WTC11 (cell line): ENCODE measurements at regions of chr1 and their contacts with region 1.

Region 1: DNA sequence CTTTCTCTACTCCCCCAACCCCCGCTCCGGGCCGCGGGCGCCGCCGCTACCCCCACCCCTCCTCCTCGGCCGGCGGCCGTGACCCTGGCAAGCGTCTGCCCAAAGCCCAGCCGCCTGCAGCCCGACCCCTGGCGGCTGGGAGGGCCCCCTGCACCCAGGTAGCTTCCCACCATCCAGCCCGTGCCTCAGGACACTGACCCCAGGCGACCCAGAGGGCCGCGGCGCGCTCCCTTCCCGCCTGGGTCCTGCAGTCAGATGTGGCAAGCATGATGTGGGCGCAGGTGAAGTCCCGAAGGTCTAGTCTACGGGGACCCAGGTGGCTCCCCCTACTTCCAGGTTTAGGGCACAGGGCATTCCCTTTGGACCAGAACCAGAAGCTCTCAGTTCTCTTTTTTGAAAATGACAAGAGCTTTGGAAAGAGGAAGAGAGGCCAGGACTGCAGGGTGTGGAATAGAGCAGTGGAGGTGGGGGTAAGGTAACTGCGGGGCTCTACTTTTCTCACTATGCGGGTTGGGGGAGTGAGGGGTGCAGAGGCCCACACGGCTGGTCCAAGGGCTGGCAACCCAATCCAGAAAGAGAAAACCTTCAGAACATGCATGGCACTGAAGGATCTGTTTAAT is at the start of gene DENND4B:
- DNase-seq: peak; percentile 91
- ATAC-seq: peak; percentile 93
- H3K4me3 Mint-ChIP-seq: peak within 1 kb of the TSS; percentile 81
- H3K27ac Mint-ChIP-seq: peak within 1 kb of the TSS; percentile 8
- H3K4me1 Mint-ChIP-seq: peaks cover 13% of the 10 kb centered on the region
- H3K27me3 Mint-ChIP-seq: no peaks in the 10 kb centered on the region
- CTCF ChIP-seq: peak; percentile 85
- total RNA-seq, gene DENND4B: 88.9 to 93.9 TPM (median 93.1 TPM) in 3 replicates

Region 2: DNA sequence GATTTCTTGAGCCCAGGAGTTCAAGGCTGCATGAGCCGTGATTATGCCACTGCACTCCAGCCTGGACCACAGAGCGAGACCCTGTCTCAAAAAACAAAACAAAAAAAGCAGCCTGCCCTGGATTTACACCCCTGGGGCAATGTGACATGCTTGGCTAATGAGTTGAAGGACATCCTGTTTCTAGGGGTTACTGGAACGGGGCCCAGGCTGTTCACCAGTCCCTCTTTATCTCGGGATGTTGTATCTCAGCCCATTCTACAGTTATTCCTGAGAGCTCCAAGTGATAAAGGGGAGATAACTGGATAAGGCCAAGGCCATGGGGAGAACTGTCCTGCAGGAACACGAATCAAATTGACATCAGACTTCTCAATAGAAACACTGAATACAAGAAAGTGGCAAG is 359.4 kb before region 1 on chr1:
- CTCF ChIA-PET with region 1: no interaction called
- POLR2A ChIA-PET with region 1: no interaction called
- DNase-seq: no peak
- ATAC-seq: no peak
- H3K4me3 Mint-ChIP-seq: no peak overlapping the region
- H3K27ac Mint-ChIP-seq: no peak overlapping the region
- H3K4me1 Mint-ChIP-seq: peaks cover 4% of the 10 kb centered on the region
- H3K27me3 Mint-ChIP-seq: no peaks in the 10 kb centered on the region
- CTCF ChIP-seq: no peak

Region 3: GRCh38 chr1:153677718-153678505 is 268.8 kb before region 1 on chr1:
- CTCF ChIA-PET with region 1: interaction called, 10 read pairs
- POLR2A ChIA-PET with region 1: no interaction called
- DNase-seq: peak; percentile 78
- ATAC-seq: peak; percentile 63
- H3K4me3 Mint-ChIP-seq: peak overlapping the region; percentile 87
- H3K27ac Mint-ChIP-seq: no peak overlapping the region
- H3K4me1 Mint-ChIP-seq: peaks cover 18% of the 10 kb centered on the region
- H3K27me3 Mint-ChIP-seq: peaks cover 24% of the 10 kb centered on the region
- CTCF ChIP-seq: peak; percentile 82

Region 4: DNA sequence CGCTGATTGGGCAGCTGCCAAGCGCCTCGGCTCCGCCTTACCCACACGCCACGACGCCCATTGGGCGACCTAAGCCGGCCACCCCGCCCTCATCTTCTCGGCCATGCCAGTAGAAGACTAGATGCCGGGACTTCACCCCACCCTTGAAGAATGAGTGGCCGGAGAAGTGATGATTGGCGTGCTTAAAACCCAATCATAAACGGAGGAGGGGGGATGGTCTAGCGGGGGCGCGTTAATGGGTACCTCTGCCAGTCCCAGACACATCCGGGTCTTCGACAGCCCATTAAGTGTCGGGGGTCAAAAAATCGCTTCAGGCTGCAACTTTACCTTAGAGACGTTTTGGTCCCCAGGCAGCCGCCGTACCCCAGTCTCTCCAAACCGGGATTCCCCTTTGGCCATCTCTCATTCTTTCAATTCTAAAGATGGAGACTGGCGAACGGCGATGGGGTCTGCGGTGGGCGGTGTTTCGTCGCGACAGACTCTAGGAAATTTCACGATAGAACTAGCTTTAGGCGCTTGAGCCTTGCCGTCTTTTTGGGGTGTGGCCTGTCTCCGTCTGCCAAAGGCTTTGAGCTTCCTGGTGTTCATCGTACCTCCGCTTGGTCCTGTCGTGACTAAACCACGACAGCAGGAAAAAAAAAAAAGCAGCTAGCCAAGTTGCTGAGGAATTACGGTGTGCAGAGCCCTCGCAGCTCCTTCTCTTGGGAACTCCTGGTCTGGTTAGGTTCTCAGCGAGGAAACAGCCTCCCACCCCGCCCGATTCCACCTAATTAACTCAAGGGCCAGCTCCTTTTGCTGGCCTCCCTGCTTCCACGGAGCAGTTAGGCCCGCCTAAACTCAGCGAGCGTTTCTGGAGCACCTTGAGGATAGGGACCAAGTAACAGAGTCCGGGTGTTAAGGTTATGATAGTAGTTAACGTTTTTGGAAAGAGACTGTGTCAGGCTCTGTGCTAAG is 23.5 kb before region 1 on chr1 and contains the start of gene GATAD2B:
- CTCF ChIA-PET with region 1: interaction called, 24 read pairs
- POLR2A ChIA-PET with region 1: interaction called, 6 read pairs
- DNase-seq: peak; percentile 99
- ATAC-seq: peak; percentile 97
- H3K4me3 Mint-ChIP-seq: peak within 1 kb of the TSS; percentile 96
- H3K27ac Mint-ChIP-seq: peak within 1 kb of the TSS; percentile 96
- H3K4me1 Mint-ChIP-seq: peaks cover 26% of the 10 kb centered on the region
- H3K27me3 Mint-ChIP-seq: no peaks in the 10 kb centered on the region
- CTCF ChIP-seq: no peak
- total RNA-seq, gene GATAD2B: 42.1 to 46.9 TPM (median 44.5 TPM) in 3 replicates

Region 5: GRCh38 chr1:153958111-153958960 is 11.6 kb after region 1 on chr1 and contains the start of gene CRTC2:
- CTCF ChIA-PET with region 1: interaction called, 27 read pairs
- POLR2A ChIA-PET with region 1: interaction called, 8 read pairs
- DNase-seq: peak; percentile 99
- ATAC-seq: peak; percentile 88
- H3K4me3 Mint-ChIP-seq: peak within 1 kb of the TSS; percentile 94
- H3K27ac Mint-ChIP-seq: peak within 1 kb of the TSS; percentile 93
- H3K4me1 Mint-ChIP-seq: peaks cover 50% of the 10 kb centered on the region
- H3K27me3 Mint-ChIP-seq: no peaks in the 10 kb centered on the region
- CTCF ChIP-seq: no peak
- total RNA-seq, gene CRTC2: 34.7 to 43.7 TPM (median 38.1 TPM) in 3 replicates

Region 6: GRCh38 chr1:153977250-153978240 is 30.8 kb after region 1 on chr1 and contains the start of gene JTB:
- CTCF ChIA-PET with region 1: interaction called, 15 read pairs
- POLR2A ChIA-PET with region 1: no interaction called
- DNase-seq: peak; percentile 88
- ATAC-seq: peak; percentile 87
- H3K4me3 Mint-ChIP-seq: peak within 1 kb of the TSS; percentile 98
- H3K27ac Mint-ChIP-seq: peak within 1 kb of the TSS; percentile 97
- H3K4me1 Mint-ChIP-seq: peaks cover 31% of the 10 kb centered on the region
- H3K27me3 Mint-ChIP-seq: no peaks in the 10 kb centered on the region
- CTCF ChIP-seq: no peak
- total RNA-seq, gene JTB: 88.8 to 90.6 TPM (median 90.3 TPM) in 3 replicates

Region 7: DNA sequence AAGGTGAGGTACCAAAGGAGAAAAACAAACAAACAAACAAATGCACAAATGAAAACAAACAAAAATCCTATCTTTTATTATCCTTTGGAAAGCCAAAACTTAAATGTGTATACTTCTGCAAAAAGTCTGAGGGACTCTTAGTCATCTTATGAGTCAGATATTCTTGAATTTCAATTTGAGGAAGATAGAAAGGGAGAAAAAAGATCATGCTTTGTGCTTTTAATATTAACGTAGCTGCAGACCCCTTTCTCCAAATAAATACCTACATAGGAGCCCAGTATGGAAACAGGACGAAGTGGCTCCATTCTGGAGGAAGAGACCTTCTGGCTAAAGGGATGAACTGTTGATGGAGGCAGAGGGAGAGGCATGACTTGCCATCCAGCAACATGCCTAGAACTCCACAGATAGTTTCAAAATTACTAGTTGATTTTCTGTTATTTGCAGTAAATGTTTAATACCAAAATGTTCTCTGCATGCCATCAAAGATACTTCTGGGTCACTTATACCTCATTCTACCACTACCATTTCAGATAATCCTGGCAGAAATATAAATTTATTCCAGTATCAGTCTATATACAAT is 182.7 kb after region 1 on chr1:
- CTCF ChIA-PET with region 1: no interaction called
- POLR2A ChIA-PET with region 1: no interaction called
- DNase-seq: no peak
- ATAC-seq: no peak
- H3K4me3 Mint-ChIP-seq: no peak overlapping the region
- H3K27ac Mint-ChIP-seq: no peak overlapping the region
- H3K4me1 Mint-ChIP-seq: no peaks in the 10 kb centered on the region
- H3K27me3 Mint-ChIP-seq: no peaks in the 10 kb centered on the region
- CTCF ChIP-seq: no peak